Endothelial cell of umbilical vein (primary cell): ENCODE measurements at regions of chr7 and their contacts with region 1.

Region 1: DNA sequence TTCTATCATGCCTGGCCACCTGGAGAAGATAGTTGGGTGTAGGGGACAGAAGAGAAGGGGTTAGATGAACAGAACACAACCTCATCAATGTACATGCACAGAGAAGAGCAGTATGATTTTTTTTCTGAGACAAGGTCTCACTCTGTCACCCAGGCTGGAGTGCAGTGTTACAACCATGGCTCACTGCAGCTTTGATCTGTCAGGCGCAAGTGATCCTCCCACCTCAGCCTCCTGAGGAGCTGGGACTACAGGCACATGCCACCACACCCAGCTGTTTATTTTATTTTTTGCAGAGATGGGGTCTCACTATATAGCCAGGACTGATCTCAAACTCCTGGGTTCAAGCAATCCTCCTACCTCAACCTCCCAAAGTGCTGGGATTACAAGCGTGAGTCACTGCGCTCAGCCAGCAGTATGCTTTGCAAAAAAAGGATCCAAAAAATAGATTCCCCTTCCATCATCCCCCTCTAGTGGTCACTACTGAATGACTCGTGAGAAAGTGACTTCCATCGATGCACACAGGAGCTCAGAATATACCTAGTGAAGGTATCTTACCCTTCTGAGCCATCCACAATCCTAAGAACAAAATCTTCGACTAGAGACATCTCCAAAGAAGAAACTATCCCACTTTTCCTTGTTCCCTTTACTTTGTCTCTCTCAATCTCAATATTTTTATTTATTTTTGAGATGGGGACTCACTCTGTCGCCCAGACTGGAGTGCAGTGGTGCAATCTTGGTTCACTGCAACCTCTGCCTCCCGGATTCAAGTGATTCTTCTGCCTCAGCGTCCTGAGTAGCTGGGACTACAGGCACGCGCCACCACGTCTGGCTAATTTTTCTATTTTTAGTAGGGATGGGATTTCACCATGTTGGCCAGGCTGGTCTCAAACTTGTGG is 21.0 kb downstream of the ZCWPW1 start:
- DNase-seq: peak; percentile 72
- H3K4me3 ChIP-seq: no peak overlapping the region
- H3K27ac ChIP-seq: no peak overlapping the region
- H3K4me1 ChIP-seq: no peaks in the 10 kb centered on the region
- H3K27me3 ChIP-seq: peaks cover 23 to 38% of the 10 kb centered on the region in 2 experiments
- CTCF ChIP-seq: peak; percentile 52 to 66
- POLR2A ChIP-seq: no peak

Region 2: DNA sequence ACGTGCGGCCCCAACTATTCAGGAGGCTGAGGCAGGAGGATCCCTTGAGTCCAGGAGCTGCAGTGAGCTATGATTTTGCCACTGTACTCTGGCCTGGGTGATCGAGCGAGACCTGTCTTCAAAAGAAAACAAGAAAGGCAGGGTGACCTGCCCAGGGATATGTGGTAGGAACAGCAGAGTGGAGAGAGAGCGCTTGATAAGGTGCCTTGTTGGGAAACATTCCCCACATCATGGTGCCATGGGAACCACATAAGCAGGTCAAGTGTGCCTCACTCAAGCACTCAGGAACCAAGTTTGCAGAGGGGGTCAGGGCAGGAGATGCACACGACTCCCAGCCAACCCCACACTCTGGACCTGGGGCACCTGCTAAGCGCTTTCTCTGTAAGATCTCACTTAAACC is 150.5 kb before region 1 on chr7:
- CTCF ChIA-PET with region 1: no interaction called
- POLR2A ChIA-PET with region 1: no interaction called
- dilution Hi-C with region 1: no loop called
- intact Hi-C with region 1: no loop called
- DNase-seq: no peak
- H3K4me3 ChIP-seq: no peak overlapping the region
- H3K27ac ChIP-seq: no peak overlapping the region
- H3K4me1 ChIP-seq: no peaks in the 10 kb centered on the region
- H3K27me3 ChIP-seq: no peaks in the 10 kb centered on the region
- CTCF ChIP-seq: no peak
- POLR2A ChIP-seq: no peak

Region 3: DNA sequence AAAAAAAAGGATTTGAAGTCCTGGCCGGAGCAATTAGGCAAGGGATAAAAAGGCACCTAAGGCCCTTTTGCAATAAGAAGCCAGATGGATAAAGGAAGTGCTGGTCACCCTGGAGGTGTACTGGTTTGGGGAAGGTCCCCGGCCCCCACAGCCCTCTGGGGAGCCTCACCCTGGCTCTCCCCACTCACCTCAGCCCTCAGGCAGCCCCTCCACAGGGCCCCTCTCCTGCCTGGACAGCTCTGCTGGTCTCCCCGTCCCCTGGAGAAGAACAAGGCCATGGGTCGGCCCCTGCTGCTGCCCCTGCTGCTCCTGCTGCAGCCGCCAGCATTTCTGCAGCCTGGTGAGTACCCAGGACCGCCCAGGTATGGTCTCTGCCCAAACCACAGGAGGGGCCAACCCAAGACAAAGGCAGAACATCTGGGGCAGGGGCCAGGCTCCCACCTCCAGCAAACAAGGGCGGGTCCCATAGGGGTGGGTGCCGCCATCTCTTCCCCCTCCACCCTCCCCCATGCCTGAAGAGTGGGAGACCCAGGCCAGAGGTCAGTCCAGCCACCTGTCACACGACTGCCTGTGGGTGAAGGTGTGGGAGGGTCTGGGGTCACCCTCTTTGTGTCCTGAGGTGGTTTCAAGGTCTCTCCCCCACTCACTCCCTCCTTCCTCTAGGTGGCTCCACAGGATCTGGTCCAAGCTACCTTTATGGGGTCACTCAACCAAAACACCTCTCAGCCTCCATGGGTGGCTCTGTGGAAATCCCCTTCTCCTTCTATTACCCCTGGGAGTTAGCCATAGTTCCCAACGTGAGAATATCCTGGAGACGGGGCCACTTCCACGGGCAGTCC is 49.3 kb before region 1 on chr7 and contains the start of gene PILRB:
- CTCF ChIA-PET with region 1: interaction called, 4 read pairs
- POLR2A ChIA-PET with region 1: no interaction called
- dilution Hi-C with region 1: no loop called
- intact Hi-C with region 1: loop called (anchors 5 kb)
- DNase-seq: no peak
- H3K4me3 ChIP-seq: no peak within 1 kb of the TSS
- H3K27ac ChIP-seq: no peak within 1 kb of the TSS
- H3K4me1 ChIP-seq: no peaks in the 10 kb centered on the region
- H3K27me3 ChIP-seq: no peaks in the 10 kb centered on the region
- CTCF ChIP-seq: no peak
- POLR2A ChIP-seq: no peak
- total RNA-seq, gene PILRB: 36.5 and 42.5 TPM in 2 replicates

Region 4: GRCh38 chr7:100373261-100373831 is 34.2 kb before region 1 on chr7 and contains the start of gene PILRA:
- CTCF ChIA-PET with region 1: interaction called, 16 read pairs
- POLR2A ChIA-PET with region 1: interaction called, 4 read pairs
- dilution Hi-C with region 1: no loop called
- intact Hi-C with region 1: no loop called
- DNase-seq: no peak
- H3K4me3 ChIP-seq: no peak within 1 kb of the TSS
- H3K27ac ChIP-seq: no peak within 1 kb of the TSS
- H3K4me1 ChIP-seq: peaks cover 4% of the 10 kb centered on the region
- H3K27me3 ChIP-seq: no peaks in the 10 kb centered on the region
- CTCF ChIP-seq: no peak
- POLR2A ChIP-seq: no peak
- total RNA-seq, gene PILRA: 0.53 and 1.3 TPM in 2 replicates

Region 5: DNA sequence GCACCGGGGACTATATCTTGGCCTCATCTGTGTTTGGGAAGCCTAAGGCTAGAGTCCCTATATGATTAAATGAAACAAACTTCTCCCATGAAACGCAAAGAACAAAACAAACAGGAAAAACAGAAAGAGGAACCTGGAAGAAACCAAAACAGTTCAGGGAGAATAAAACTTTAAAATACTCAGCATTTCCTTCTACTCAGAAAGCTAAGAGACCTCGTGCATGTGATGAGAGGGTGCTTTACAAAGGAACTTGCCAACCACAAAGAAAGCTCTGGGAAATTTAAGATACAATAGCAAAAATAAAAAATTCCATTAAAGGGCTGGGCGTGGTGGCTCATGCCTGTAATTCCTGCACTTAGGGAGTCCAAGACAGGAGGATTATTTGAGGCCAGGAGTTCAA is 27.3 kb before region 1 on chr7:
- CTCF ChIA-PET with region 1: interaction called, 16 read pairs
- POLR2A ChIA-PET with region 1: interaction called, 4 read pairs
- dilution Hi-C with region 1: no loop called
- intact Hi-C with region 1: no loop called
- DNase-seq: no peak
- H3K4me3 ChIP-seq: no peak overlapping the region
- H3K27ac ChIP-seq: no peak overlapping the region
- H3K4me1 ChIP-seq: peaks cover 6% of the 10 kb centered on the region
- H3K27me3 ChIP-seq: peaks cover 0 to 1% of the 10 kb centered on the region in 2 experiments
- CTCF ChIP-seq: no peak
- POLR2A ChIP-seq: no peak

Region 6: GRCh38 chr7:100390286-100391009 is 17.1 kb before region 1 on chr7:
- CTCF ChIA-PET with region 1: interaction called, 12 read pairs
- POLR2A ChIA-PET with region 1: no interaction called
- dilution Hi-C with region 1: no loop called
- intact Hi-C with region 1: no loop called
- DNase-seq: no peak
- H3K4me3 ChIP-seq: no peak overlapping the region
- H3K27ac ChIP-seq: no peak overlapping the region
- H3K4me1 ChIP-seq: no peaks in the 10 kb centered on the region
- H3K27me3 ChIP-seq: peaks cover 9 to 20% of the 10 kb centered on the region in 2 experiments
- CTCF ChIP-seq: no peak
- POLR2A ChIP-seq: no peak

Region 7: GRCh38 chr7:100396421-100396982 is 11.0 kb before region 1 on chr7:
- CTCF ChIA-PET with region 1: interaction called, 12 read pairs
- POLR2A ChIA-PET with region 1: no interaction called
- dilution Hi-C with region 1: no loop called
- intact Hi-C with region 1: no loop called
- DNase-seq: no peak
- H3K4me3 ChIP-seq: no peak overlapping the region
- H3K27ac ChIP-seq: no peak overlapping the region
- H3K4me1 ChIP-seq: no peaks in the 10 kb centered on the region
- H3K27me3 ChIP-seq: peaks cover 3 to 14% of the 10 kb centered on the region in 2 experiments
- CTCF ChIP-seq: no peak
- POLR2A ChIP-seq: no peak

Region 8: DNA sequence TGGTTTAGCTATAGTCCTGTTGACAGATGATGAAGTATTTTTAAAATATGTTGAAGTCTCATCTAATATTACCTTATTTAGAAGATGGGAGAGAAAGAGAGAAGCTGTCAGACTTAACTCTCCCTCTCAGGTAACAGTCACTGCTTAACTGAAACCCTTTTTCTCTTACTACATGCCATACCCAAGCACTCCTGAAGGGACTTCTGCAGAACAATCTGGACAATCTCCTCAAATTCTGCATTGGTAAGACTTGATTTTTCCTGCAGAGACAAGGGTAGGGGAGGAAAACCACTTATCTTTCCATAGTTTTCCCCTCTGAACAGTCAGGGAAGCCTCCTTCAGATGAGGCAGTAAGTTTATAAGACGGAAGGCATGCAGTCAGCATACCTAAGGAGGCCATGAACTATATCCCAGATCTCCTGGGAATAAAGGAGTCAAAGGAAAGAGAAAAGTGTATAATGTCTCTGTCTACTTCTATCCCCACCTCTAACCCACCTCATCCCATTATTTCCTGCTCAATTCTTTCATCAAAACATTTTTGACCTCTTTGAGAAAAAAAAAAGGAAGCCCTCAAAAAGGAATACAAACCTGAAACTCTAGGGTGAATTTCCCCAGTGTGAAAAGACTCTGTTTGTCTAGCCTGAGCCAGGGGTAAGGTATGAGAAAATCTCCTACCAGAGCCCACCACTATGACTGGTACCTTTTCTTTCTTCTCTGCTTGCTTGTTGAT is 11.6 kb after region 1 on chr7:
- CTCF ChIA-PET with region 1: interaction called, 22 read pairs
- POLR2A ChIA-PET with region 1: no interaction called
- dilution Hi-C with region 1: no loop called
- intact Hi-C with region 1: no loop called
- DNase-seq: no peak
- H3K4me3 ChIP-seq: no peak overlapping the region
- H3K27ac ChIP-seq: no peak overlapping the region
- H3K4me1 ChIP-seq: no peaks in the 10 kb centered on the region
- H3K27me3 ChIP-seq: peaks cover 3 to 5% of the 10 kb centered on the region in 2 experiments
- CTCF ChIP-seq: no peak
- POLR2A ChIP-seq: no peak